Tibial artery (tissue), 4 donors: ENCODE measurements at regions of chr3 and their contacts with region 1.

Region 1: DNA sequence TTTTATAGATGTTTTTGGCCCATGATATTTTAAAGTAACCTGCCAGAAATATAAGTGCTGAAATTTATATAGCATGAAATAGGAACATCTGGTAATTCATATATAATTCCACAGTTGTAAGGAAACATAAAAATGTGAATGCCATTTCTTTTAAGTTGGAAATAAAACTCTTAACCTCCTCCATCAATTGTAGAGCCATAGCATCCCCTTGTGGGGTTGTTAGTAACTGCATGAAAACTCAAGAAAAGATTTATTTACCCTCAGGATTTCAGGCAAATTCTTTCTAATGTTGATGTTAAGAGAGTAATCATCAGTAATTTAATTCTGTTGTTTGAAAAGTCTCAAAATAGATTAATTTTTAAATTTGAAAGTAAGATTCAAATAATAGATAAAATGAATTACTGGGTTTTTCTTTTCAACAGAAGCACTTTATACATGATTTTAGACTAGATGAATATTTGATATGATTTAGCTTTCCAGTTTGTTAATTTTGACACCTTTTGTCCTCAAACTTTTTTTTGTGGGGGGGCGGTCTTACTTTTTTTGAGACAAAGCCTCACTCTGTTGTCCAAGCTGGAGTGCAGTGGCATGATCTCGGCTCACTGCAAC is 74.7 kb downstream of the RASA2 start:
- DNase-seq: no peak
- H3K4me3 ChIP-seq: no peak overlapping the region
- H3K27ac ChIP-seq: peak overlapping the region in 1 of 2 donors; percentile 44
- H3K4me1 ChIP-seq: peaks cover 0 to 11% (median 4%) of the 10 kb centered on the region in 4 donors
- H3K27me3 ChIP-seq: no peaks in the 10 kb centered on the region
- CTCF ChIP-seq: peak; percentile 97 to 98

Region 2: GRCh38 chr3:141462176-141462859 is 99.2 kb before region 1 on chr3:
- intact Hi-C with region 1: loop called (anchors 2 kb)
- DNase-seq: no peak
- H3K4me3 ChIP-seq: no peak overlapping the region
- H3K27ac ChIP-seq: no peak overlapping the region
- H3K4me1 ChIP-seq: peaks cover 0 to 3% (median 0%) of the 10 kb centered on the region in 4 donors
- H3K27me3 ChIP-seq: no peaks in the 10 kb centered on the region
- CTCF ChIP-seq: no peak

Region 3: GRCh38 chr3:141477224-141477623 is 84.3 kb before region 1 on chr3:
- intact Hi-C with region 1: loop called (anchors 5 kb)
- DNase-seq: no peak
- H3K4me3 ChIP-seq: no peak overlapping the region
- H3K27ac ChIP-seq: no peak overlapping the region
- H3K4me1 ChIP-seq: no peaks in the 10 kb centered on the region
- H3K27me3 ChIP-seq: no peaks in the 10 kb centered on the region
- CTCF ChIP-seq: no peak

Region 4: DNA sequence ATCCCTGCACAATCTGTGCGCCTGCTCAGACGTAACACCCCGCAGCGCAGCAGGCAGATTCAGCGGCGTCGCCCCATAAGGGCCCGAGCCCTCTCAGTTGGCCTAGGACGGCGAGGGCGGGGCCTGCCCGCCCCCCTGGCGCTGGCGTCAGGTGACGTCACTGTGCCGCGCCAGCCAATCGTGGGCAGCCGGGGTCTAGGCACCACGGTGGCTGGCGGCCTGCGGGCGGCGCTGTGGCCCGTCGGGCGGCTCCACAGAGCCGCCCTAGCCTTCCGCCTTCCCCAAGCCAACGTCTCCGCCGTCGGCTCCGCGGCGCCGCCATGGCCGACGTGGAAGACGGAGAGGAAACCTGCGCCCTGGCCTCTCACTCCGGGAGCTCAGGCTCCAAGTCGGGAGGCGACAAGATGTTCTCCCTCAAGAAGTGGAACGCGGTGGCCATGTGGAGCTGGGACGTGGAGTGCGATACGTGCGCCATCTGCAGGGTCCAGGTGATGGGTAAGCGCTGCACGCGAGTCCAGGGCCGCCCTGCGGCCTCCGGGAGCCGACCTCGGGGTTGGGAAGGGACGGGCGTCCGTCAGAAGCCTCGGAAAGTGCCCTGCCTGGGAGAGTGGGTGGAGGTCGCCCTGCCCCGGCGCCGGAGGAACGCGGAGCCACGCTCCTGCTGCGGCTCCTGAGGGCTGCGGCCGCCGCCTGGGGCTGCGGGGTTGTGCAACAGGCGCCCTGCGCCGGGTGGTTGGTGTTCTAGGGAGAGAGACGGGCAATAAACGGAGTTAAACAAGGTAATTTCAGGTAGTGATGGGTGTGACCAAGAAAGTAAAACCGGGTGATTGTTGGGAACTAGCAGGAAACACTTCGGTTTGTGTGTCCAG is 176.7 kb after region 1 on chr3 and contains the start of gene RNF7:
- intact Hi-C with region 1: loop called (anchors 10 kb)
- DNase-seq: peak; percentile 92 to 97
- H3K4me3 ChIP-seq: peak within 1 kb of the TSS; percentile 76 to 88
- H3K27ac ChIP-seq: peak within 1 kb of the TSS; percentile 95 to 96
- H3K4me1 ChIP-seq: peaks cover 0 to 37% (median 25%) of the 10 kb centered on the region in 4 donors
- H3K27me3 ChIP-seq: no peaks in the 10 kb centered on the region
- CTCF ChIP-seq: peak; percentile 86 to 90

Region 5: GRCh38 chr3:141870091-141870687 is 308.7 kb after region 1 on chr3:
- intact Hi-C with region 1: no loop called
- DNase-seq: no peak
- H3K4me3 ChIP-seq: no peak overlapping the region
- H3K27ac ChIP-seq: no peak overlapping the region
- H3K4me1 ChIP-seq: peaks cover 0 to 5% (median 0%) of the 10 kb centered on the region in 4 donors
- H3K27me3 ChIP-seq: no peaks in the 10 kb centered on the region
- CTCF ChIP-seq: no peak